A549 (cell line): ENCODE measurements at regions of chr3 and their contacts with region 1.

Region 1: GRCh38 chr3:153161138-153161713 is 800 bp upstream of the RAP2B start:
- DNase-seq: peak; percentile 99 to 100
- ATAC-seq: peak; percentile 76 to 91
- H3K4me3 ChIP-seq: peak overlapping the region; percentile 91
- H3K27ac ChIP-seq: peak overlapping the region; percentile 93 to 97
- H3K4me1 ChIP-seq: peaks cover 46% of the 10 kb centered on the region
- CTCF ChIP-seq: no peak
- EP300 ChIP-seq: no peak
- POLR2A ChIP-seq: peak; percentile 17
- RAD21 ChIP-seq: no peak

Region 2: GRCh38 chr3:153043729-153044328 is 117.4 kb before region 1 on chr3:
- CTCF ChIA-PET with region 1: interaction called, 47 read pairs
- POLR2A ChIA-PET with region 1: interaction called, 71 read pairs
- DNase-seq: no peak
- ATAC-seq: 0 out of 6 replicates have a peak, but pooled peaks have one; percentile 21 to 62
- H3K4me3 ChIP-seq: peak overlapping the region; percentile 43; the same call in 2 of the 3 replicates
- H3K27ac ChIP-seq: peak overlapping the region; percentile 80 to 86
- H3K4me1 ChIP-seq: peaks cover 20% of the 10 kb centered on the region
- CTCF ChIP-seq: no peak
- EP300 ChIP-seq: no peak
- POLR2A ChIP-seq: no peak
- RAD21 ChIP-seq: no peak

Region 3: DNA sequence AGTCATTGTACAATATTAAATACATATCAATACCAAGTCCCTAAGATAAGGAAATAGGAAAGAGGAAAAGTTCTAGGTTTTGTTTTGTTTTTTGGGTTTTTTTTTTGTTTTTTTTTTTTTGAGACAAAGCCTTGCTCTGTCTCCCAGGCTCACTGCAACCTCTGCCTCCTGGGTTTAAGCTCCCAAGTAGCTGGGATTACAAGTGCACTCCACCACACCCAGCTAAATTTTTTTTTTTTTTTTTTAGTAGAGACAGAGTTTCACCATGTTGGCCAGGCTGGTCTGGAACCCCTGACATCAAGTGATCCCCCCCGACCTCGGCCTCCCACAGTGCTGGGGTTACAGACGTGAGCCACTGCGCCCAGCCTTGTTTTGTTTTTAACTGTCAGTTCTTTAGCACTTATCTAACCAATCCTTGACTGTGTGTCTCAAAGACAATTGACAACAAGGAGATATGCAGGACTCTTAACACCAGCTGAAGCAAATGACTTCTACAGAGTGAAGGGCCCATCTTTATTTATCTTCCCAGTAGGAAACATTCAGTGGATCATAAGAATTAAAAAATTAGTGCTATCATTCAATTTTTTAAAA is 99.2 kb before region 1 on chr3:
- CTCF ChIA-PET with region 1: no interaction called
- POLR2A ChIA-PET with region 1: interaction called, 15 read pairs
- DNase-seq: no peak
- ATAC-seq: no peak
- H3K4me3 ChIP-seq: no peak overlapping the region
- H3K27ac ChIP-seq: no peak overlapping the region
- H3K4me1 ChIP-seq: peaks cover 22% of the 10 kb centered on the region
- CTCF ChIP-seq: no peak
- EP300 ChIP-seq: no peak
- POLR2A ChIP-seq: no peak
- RAD21 ChIP-seq: no peak

Region 4: GRCh38 chr3:153138276-153139210 is 22.7 kb before region 1 on chr3:
- CTCF ChIA-PET with region 1: interaction called, 6 read pairs
- POLR2A ChIA-PET with region 1: interaction called, 92 read pairs
- DNase-seq: peak; percentile 74 to 95
- ATAC-seq: peak; percentile 91 to 97
- H3K4me3 ChIP-seq: no peak overlapping the region
- H3K27ac ChIP-seq: peak overlapping the region; percentile 85 to 93
- H3K4me1 ChIP-seq: peaks cover 56% of the 10 kb centered on the region
- CTCF ChIP-seq: no peak
- EP300 ChIP-seq: peak; percentile 90 to 91; a peak in 3 of 5 replicates
- POLR2A ChIP-seq: no peak
- RAD21 ChIP-seq: peak in 1 of 2 experiments; percentile 57; a peak in 3 of 5 replicates

Region 5: GRCh38 chr3:153291056-153291685 is 129.9 kb after region 1 on chr3:
- CTCF ChIA-PET with region 1: interaction called, 3 read pairs
- POLR2A ChIA-PET with region 1: interaction called, 13 read pairs
- DNase-seq: peak in 1 of 2 experiments; percentile 37
- ATAC-seq: peak; percentile 69 to 81; a peak in 3 of 6 replicates
- H3K4me3 ChIP-seq: no peak overlapping the region
- H3K27ac ChIP-seq: no peak overlapping the region
- H3K4me1 ChIP-seq: peaks cover 19% of the 10 kb centered on the region; the same call in 2 of the 3 replicates
- CTCF ChIP-seq: peak; percentile 41; the same call in 2 of the 3 replicates
- EP300 ChIP-seq: no peak
- POLR2A ChIP-seq: no peak
- RAD21 ChIP-seq: peak; percentile 21 to 44; a peak in 2 of 5 replicates